PC-3 (cell line): ENCODE measurements at regions of chr10 and their contacts with region 1.

Region 1: DNA sequence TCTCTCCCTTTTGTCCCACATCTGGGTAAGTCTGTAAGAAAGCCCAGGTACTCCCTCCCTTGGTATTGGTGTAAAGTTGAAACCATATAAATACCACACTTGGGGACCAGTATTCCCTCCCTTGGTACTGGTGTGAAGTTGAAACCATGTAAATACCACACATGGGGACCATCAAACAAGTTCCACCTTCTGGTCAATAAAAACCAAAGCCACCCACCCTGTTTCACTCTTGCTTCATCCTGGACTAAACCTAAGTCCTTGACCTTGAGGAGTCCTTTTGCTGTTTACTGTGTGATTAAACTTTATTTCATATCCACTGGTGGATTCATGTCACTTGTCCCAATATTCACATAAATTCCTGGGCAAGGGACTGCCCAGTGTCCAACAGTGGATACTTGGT is 8.4 kb downstream of the P4HA1 start:
- DNase-seq: peak; percentile 28
- ATAC-seq: peak; percentile 26
- H3K4me3 ChIP-seq: no peak overlapping the region
- H3K27ac ChIP-seq: no peak overlapping the region
- H3K4me1 ChIP-seq: peaks cover 12% of the 10 kb centered on the region
- H3K27me3 ChIP-seq: no peaks in the 10 kb centered on the region
- CTCF ChIP-seq: no peak

Region 2: DNA sequence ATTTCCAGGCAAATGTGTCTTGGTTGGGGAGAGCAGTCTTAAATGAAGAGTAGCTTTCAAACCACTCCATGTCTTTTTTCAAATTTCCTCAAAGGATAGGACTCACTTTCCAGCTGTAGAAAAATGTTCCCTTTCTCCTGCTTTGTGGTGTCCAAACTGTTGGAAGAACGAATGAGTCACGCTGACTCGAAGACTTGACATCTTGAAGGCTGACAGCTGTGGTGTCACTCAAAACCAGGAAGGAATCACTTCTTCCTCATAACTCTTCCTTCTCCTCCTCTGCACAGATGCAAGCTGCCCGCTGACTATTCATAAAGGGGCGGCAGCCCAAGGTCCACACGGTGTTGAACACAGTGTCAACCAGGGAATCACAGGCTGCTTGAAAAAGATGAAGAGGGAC is 152.9 kb before region 1 on chr10:
- CTCF ChIA-PET with region 1: interaction called, 15 read pairs
- POLR2A ChIA-PET with region 1: no interaction called
- intact Hi-C with region 1: no loop called
- DNase-seq: peak; percentile 97
- ATAC-seq: peak; percentile 83
- H3K4me3 ChIP-seq: no peak overlapping the region
- H3K27ac ChIP-seq: no peak overlapping the region
- H3K4me1 ChIP-seq: peaks cover 10% of the 10 kb centered on the region
- H3K27me3 ChIP-seq: peaks cover 8% of the 10 kb centered on the region; the same call in 1 of the 2 replicates
- CTCF ChIP-seq: no peak

Region 3: GRCh38 chr10:72997099-72997498 is 91.2 kb before region 1 on chr10:
- CTCF ChIA-PET with region 1: no interaction called
- POLR2A ChIA-PET with region 1: no interaction called
- intact Hi-C with region 1: no loop called
- DNase-seq: no peak
- ATAC-seq: peak; percentile 10; the same call in 1 of the 2 replicates
- H3K4me3 ChIP-seq: no peak overlapping the region
- H3K27ac ChIP-seq: no peak overlapping the region
- H3K4me1 ChIP-seq: no peaks in the 10 kb centered on the region
- H3K27me3 ChIP-seq: no peaks in the 10 kb centered on the region
- CTCF ChIP-seq: no peak

Region 4: DNA sequence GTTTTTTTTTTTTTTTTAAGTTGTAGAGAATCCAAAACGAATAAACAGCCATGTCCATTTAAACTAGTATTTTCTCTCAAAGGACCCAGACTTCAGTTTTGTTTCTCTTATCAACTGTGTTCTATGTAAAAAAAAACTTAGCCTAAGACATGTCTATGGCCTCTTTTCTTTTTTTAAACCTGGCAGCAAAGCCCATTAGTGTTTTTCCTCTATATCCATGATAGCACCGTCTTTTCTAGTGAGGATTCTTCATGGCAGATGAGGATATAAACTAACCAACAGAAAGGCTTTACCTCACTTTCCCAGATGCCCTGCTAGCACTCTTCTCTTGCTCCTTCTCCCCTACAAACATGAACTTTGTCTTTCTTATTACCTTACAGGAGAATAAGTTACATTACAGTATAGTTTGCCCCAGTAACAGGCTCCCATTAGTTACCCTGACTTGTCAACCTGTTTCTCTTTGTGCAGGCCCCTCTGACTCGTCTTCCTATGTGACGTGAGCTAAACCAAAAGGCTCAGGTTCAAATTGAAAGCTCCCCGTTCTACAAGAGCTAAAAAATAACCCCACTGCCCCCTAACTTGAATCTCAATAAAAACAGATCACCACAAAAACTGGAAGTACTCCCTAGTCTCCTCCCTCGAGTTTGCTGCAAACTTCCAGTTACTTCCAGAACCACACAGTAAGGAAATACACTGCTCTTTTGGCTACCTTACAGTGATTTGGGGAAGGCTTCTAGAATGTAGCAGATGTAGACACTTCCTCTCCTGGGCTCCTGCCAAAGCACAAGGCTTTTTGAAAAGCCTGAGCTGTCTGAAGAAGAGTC is 11.7 kb before region 1 on chr10:
- CTCF ChIA-PET with region 1: no interaction called
- POLR2A ChIA-PET with region 1: interaction called, 5 read pairs
- intact Hi-C with region 1: loop called (anchors 1 kb)
- DNase-seq: peak; percentile 77
- ATAC-seq: peak; percentile 88
- H3K4me3 ChIP-seq: peak overlapping the region; percentile 3; the same call in 1 of the 2 replicates
- H3K27ac ChIP-seq: peak overlapping the region; percentile 5
- H3K4me1 ChIP-seq: peaks cover 16% of the 10 kb centered on the region
- H3K27me3 ChIP-seq: no peaks in the 10 kb centered on the region
- CTCF ChIP-seq: no peak